Naive thymus-derived CD4-positive, alpha-beta T cell (primary cell): ENCODE measurements at regions of chr3 and their contacts with region 1.

Region 1: GRCh38 chr3:128845778-128846485 is 33.5 kb upstream of the ACAD9 start:
- DNase-seq: peak; percentile 61 to 87 (median 74)
- ATAC-seq: peak; percentile 85
- H3K4me3 ChIP-seq: peak overlapping the region; percentile 65
- H3K4me3 Mint-ChIP-seq: peak overlapping the region; percentile 65 to 88 (median 82)
- H3K27ac ChIP-seq: peak overlapping the region; percentile 64
- H3K27ac Mint-ChIP-seq: peak overlapping the region; percentile 64 to 93 (median 81)
- H3K4me1 ChIP-seq: peaks cover 0 to 14% of the 10 kb centered on the region in 2 donors
- H3K4me1 Mint-ChIP-seq: peaks cover 11 to 22% (median 17%) of the 10 kb centered on the region in 7 donors
- H3K27me3 ChIP-seq: no peaks in the 10 kb centered on the region
- H3K27me3 Mint-ChIP-seq: peaks cover 0 to 2% (median 0%) of the 10 kb centered on the region in 5 donors

Region 2: DNA sequence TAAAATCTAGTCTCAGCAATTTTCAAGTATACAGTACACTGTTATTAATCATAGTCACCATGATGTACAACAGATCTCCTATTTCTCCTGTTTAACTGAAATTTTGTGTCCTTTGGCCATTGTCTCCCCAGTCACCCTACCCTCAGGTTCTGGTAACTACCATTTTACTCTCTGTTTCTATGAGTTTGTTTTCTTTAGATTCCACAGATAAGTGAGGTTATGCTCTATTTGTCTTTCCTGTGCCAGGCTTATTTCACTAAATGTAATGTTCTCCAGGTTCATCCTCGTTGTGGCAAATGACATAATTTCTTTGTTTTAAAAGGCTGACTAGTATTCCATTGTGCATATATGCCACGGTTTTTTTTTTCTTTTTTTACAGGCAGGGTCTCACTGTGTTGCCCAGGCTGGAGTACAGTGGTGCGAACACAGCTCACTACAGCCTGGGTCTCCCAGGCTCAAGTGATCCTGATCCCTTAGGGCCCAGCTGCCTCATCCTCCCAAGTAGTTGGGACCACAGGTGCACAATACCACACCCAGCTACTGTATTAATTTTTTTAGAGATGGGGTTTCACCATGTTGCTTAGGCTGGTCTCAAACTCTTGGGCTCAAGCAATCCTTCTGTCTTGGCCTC is 69.9 kb before region 1 on chr3:
- CTCF ChIA-PET with region 1: no interaction called
- POLR2A ChIA-PET with region 1: no interaction called
- intact Hi-C with region 1: no loop called
- DNase-seq: no peak
- ATAC-seq: no peak
- H3K4me3 ChIP-seq: no peak overlapping the region
- H3K4me3 Mint-ChIP-seq: peak overlapping the region in 4 of 10 donors; percentile 2 to 61 (median 10)
- H3K27ac ChIP-seq: no peak overlapping the region
- H3K27ac Mint-ChIP-seq: peak overlapping the region in 7 of 9 donors; percentile 3 to 84 (median 37)
- H3K4me1 ChIP-seq: peaks cover 5 to 24% of the 10 kb centered on the region in 2 donors
- H3K4me1 Mint-ChIP-seq: peaks cover 35 to 86% (median 84%) of the 10 kb centered on the region in 7 donors
- H3K27me3 ChIP-seq: no peaks in the 10 kb centered on the region
- H3K27me3 Mint-ChIP-seq: no peaks in the 10 kb centered on the region

Region 3: GRCh38 chr3:128794770-128795649 is 50.9 kb before region 1 on chr3:
- CTCF ChIA-PET with region 1: interaction called, 6 read pairs
- POLR2A ChIA-PET with region 1: interaction called, 3 read pairs
- intact Hi-C with region 1: loop called (anchors 1 to 5 kb)
- DNase-seq: peak; percentile 26 to 81 (median 76)
- ATAC-seq: peak; percentile 98
- H3K4me3 ChIP-seq: no peak overlapping the region
- H3K4me3 Mint-ChIP-seq: peak overlapping the region; percentile 26 to 78 (median 51)
- H3K27ac ChIP-seq: peak overlapping the region; percentile 54
- H3K27ac Mint-ChIP-seq: peak overlapping the region; percentile 71 to 96 (median 85)
- H3K4me1 ChIP-seq: peaks cover 11 to 54% of the 10 kb centered on the region in 2 donors
- H3K4me1 Mint-ChIP-seq: peaks cover 32 to 74% (median 66%) of the 10 kb centered on the region in 7 donors
- H3K27me3 ChIP-seq: no peaks in the 10 kb centered on the region
- H3K27me3 Mint-ChIP-seq: no peaks in the 10 kb centered on the region

Region 4: GRCh38 chr3:128804017-128804810 is 41.7 kb before region 1 on chr3:
- CTCF ChIA-PET with region 1: interaction called, 5 read pairs
- POLR2A ChIA-PET with region 1: no interaction called
- intact Hi-C with region 1: loop called in 1 of 2 experiments (anchors 5 kb)
- DNase-seq: peak in 8 of 9 donors; percentile 54 to 88 (median 84)
- ATAC-seq: peak; percentile 92
- H3K4me3 ChIP-seq: peak overlapping the region; percentile 49
- H3K4me3 Mint-ChIP-seq: peak overlapping the region; percentile 48 to 89 (median 80)
- H3K27ac ChIP-seq: peak overlapping the region; percentile 74
- H3K27ac Mint-ChIP-seq: peak overlapping the region; percentile 91 to 98 (median 96)
- H3K4me1 ChIP-seq: peaks cover 22 to 64% of the 10 kb centered on the region in 2 donors
- H3K4me1 Mint-ChIP-seq: peaks cover 59 to 91% (median 85%) of the 10 kb centered on the region in 7 donors
- H3K27me3 ChIP-seq: no peaks in the 10 kb centered on the region
- H3K27me3 Mint-ChIP-seq: no peaks in the 10 kb centered on the region

Region 5: GRCh38 chr3:128922804-128923459 is 77.0 kb after region 1 on chr3:
- CTCF ChIA-PET with region 1: no interaction called
- POLR2A ChIA-PET with region 1: no interaction called
- intact Hi-C with region 1: loop called in 1 of 2 experiments (anchors 1 kb)
- DNase-seq: peak in 8 of 9 donors; percentile 60 to 73 (median 69)
- ATAC-seq: peak; percentile 73
- H3K4me3 ChIP-seq: peak overlapping the region; percentile 41
- H3K4me3 Mint-ChIP-seq: peak overlapping the region; percentile 75 to 87 (median 84)
- H3K27ac ChIP-seq: peak overlapping the region; percentile 63
- H3K27ac Mint-ChIP-seq: peak overlapping the region; percentile 75 to 96 (median 89)
- H3K4me1 ChIP-seq: peaks cover 13 to 23% of the 10 kb centered on the region in 2 donors
- H3K4me1 Mint-ChIP-seq: peaks cover 20 to 66% (median 52%) of the 10 kb centered on the region in 7 donors
- H3K27me3 ChIP-seq: no peaks in the 10 kb centered on the region
- H3K27me3 Mint-ChIP-seq: peaks cover 0 to 3% (median 0%) of the 10 kb centered on the region in 5 donors